AG04450 (cell line): ENCODE measurements at regions of chr17 and their contacts with region 1.

Region 1: DNA sequence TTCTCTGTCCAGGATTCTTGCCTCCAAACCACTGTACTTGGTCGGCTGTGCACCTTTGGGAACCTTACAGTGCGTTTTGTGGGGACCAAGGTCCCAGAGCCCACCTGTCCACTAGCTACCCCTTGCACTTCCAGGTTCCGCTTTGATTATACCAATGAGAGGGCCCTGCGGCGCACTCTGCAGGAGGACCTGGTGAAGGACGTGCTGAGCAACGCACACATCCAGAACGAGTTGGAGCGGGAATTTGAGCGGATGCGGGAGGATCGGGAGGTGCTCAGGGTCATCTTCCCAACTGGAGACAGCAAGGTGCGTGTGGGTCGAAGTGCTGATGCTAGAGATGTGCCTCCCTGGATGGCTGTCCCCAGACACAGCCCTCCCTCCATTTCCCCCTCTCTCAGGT is 18.8 kb downstream of the POLR2A start:
- DNase-seq: no peak
- H3K4me3 ChIP-seq: no peak overlapping the region
- H3K27ac ChIP-seq: no peak overlapping the region
- H3K27me3 ChIP-seq: no peaks in the 10 kb centered on the region
- CTCF ChIP-seq: peak; percentile 26; the same call in 1 of the 2 replicates

Region 2: DNA sequence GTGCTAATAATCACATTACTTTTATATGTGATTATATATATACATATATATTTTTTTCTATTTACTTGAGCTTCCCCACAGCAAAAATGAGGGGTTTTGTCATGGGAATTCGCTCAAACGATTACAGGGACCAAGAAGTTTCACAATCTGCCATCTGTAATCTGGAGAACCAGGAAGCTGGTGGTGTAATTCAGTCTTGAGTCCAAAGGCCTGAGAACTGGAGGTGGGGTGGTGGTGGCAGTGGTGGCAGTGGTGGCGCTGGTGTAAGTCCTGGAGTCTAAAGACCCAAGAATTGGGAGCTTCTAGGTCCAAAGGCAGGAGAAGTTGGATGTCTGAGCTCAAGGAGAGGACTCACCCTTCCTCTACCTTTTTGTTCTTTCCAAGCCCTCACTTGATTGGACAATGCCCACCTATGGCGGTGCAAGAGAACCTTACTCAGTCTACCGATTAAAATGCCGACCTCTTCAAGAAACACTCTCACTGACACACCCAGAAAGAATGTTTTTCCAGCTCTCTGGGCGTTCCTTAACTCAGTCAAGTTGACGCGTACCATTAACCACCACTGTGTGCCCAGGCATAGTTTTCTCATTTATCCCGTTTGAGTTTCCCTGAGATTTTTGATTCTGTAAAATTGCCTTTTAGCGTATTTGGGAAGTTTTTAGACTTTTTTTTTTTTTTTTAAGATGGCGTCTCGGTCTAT is 13.1 kb after region 1 on chr17:
- CTCF ChIA-PET with region 1: interaction called, 16 read pairs
- POLR2A ChIA-PET with region 1: no interaction called
- DNase-seq: no peak
- H3K4me3 ChIP-seq: no peak overlapping the region
- H3K27ac ChIP-seq: no peak overlapping the region
- H3K27me3 ChIP-seq: no peaks in the 10 kb centered on the region
- CTCF ChIP-seq: no peak